Activated CD4-positive, alpha-beta T cell treated with anti-CD3 and anti-CD28 coated beads, Interleukin-2, amount 10 ng/mL, durations not matched to agents 7 days and 5 days (primary cell): ENCODE measurements at regions of chr1 and their contacts with region 1.

Region 1: GRCh38 chr1:162036163-162036562 is 12.5 kb upstream of the OLFML2B start:
- DNase-seq: no peak
- H3K4me3 Mint-ChIP-seq: no peak overlapping the region
- H3K27ac Mint-ChIP-seq: no peak overlapping the region
- H3K4me1 Mint-ChIP-seq: peaks cover 5% of the 10 kb centered on the region
- H3K27me3 Mint-ChIP-seq: peaks cover 14% of the 10 kb centered on the region

Region 2: DNA sequence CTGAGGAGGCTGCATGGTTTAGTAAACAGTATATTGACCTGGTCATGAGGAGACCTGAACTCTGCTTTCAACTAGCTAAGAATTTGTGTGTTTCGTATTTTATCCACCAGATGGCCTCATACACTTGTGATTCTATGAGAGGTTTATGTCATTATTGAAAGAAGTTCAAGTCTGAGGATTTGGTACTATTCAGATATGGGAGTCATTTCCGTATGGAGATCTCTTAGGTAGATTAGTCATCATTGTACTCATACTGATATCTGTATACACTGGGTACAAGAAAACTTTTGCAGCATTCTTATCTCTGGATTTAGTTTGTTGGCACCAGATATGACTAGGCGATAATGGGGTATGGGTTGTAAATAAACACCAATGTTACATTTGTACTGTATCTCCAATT is 243.4 kb before region 1 on chr1:
- CTCF ChIA-PET with region 1: interaction called, 30 read pairs
- POLR2A ChIA-PET with region 1: interaction called, 3 read pairs
- DNase-seq: no peak
- H3K4me3 Mint-ChIP-seq: no peak overlapping the region
- H3K27ac Mint-ChIP-seq: no peak overlapping the region
- H3K4me1 Mint-ChIP-seq: peaks cover 19% of the 10 kb centered on the region
- H3K27me3 Mint-ChIP-seq: no peaks in the 10 kb centered on the region

Region 3: GRCh38 chr1:162023547-162024501 is 12.3 kb before region 1 on chr1 and contains the start of gene OLFML2B:
- CTCF ChIA-PET with region 1: interaction called, 11 read pairs
- POLR2A ChIA-PET with region 1: no interaction called
- DNase-seq: peak; percentile 59
- H3K4me3 Mint-ChIP-seq: peak within 1 kb of the TSS; percentile 82
- H3K27ac Mint-ChIP-seq: no peak within 1 kb of the TSS
- H3K4me1 Mint-ChIP-seq: peaks cover 12% of the 10 kb centered on the region
- H3K27me3 Mint-ChIP-seq: peaks cover 48% of the 10 kb centered on the region
- total RNA-seq, gene OLFML2B: not detected